ENCODE measurements at regions of chr11 and their contacts with region 1.

Region 1: GRCh38 chr11:1389103-1389931 is 417 bp upstream of the BRSK2 start:
- DNase-seq: peak; percentile 92
- ATAC-seq: peak; percentile 99
- H3K4me3 ChIP-seq: peak overlapping the region; percentile 65
- H3K27ac ChIP-seq: no peak overlapping the region
- H3K4me1 ChIP-seq: 0 out of 2 replicates have a peak, but pooled peaks cover 4% of the 10 kb centered on the region
- H3K27me3 ChIP-seq: no peaks in the 10 kb centered on the region
- CTCF ChIP-seq: no peak

Region 2: GRCh38 chr11:1262172-1263006 is 126.9 kb before region 1 on chr11:
- CTCF ChIA-PET with region 1: no interaction called
- POLR2A ChIA-PET with region 1: no interaction called
- intact Hi-C with region 1: loop called (anchors 5 kb)
- DNase-seq: peak; percentile 83
- ATAC-seq: peak; percentile 78
- H3K4me3 ChIP-seq: peak overlapping the region; percentile 58
- H3K27ac ChIP-seq: peak overlapping the region; percentile 44
- H3K4me1 ChIP-seq: peaks cover 13% of the 10 kb centered on the region
- H3K27me3 ChIP-seq: no peaks in the 10 kb centered on the region
- CTCF ChIP-seq: no peak

Region 3: DNA sequence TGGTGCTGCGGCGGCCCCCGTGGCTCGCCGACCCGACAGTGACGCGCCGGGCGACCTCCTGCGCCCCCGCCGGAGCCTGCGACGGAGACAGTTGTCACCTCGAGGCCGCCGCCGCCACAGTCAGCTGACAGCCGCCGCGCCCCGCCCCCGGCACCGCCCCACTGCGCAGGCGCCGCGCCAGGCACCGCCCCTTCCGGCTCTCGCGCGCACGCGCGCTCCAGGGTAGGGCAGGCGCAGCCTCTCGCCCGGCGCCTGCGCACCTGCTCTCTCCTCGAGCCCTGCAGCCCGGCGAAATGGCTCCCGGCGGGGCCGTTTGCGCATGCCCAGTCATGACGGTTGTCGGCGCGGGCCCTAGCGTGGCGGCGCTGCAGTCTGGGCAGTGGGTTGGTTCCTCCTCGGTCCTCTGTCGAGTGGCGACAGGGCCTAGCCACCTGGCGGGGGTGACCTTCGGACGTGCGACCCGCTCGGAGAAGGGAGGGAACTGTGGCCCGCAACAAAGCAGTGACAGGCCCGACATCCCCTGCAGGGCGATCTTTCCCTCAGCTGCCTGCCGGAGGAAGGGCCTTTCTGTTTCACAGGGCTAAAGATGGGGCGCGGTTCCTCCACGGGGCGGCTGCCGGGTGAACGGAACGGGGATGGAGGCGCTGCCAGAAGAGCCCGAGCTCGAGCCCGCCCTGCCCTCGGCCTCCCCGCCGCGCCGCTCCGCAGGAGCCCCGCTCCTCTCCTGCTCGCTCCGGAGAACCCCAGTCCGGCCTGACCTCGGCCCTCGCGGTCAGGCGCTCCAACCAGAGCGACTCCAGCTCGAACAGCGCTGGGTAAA is 79.6 kb before region 1 on chr11 and contains the start of gene TOLLIP:
- CTCF ChIA-PET with region 1: no interaction called
- POLR2A ChIA-PET with region 1: no interaction called
- intact Hi-C with region 1: loop called (anchors 10 kb)
- DNase-seq: peak; percentile 92
- ATAC-seq: peak; percentile 89
- H3K4me3 ChIP-seq: peak within 1 kb of the TSS; percentile 88
- H3K27ac ChIP-seq: peak within 1 kb of the TSS; percentile 51
- H3K4me1 ChIP-seq: peaks cover 22% of the 10 kb centered on the region
- H3K27me3 ChIP-seq: no peaks in the 10 kb centered on the region
- CTCF ChIP-seq: peak; percentile 29
- total RNA-seq, gene TOLLIP: 36.1 and 43.2 TPM in 2 replicates